ENCODE measurements at regions of chr12 and their contacts with region 1.

Region 1: DNA sequence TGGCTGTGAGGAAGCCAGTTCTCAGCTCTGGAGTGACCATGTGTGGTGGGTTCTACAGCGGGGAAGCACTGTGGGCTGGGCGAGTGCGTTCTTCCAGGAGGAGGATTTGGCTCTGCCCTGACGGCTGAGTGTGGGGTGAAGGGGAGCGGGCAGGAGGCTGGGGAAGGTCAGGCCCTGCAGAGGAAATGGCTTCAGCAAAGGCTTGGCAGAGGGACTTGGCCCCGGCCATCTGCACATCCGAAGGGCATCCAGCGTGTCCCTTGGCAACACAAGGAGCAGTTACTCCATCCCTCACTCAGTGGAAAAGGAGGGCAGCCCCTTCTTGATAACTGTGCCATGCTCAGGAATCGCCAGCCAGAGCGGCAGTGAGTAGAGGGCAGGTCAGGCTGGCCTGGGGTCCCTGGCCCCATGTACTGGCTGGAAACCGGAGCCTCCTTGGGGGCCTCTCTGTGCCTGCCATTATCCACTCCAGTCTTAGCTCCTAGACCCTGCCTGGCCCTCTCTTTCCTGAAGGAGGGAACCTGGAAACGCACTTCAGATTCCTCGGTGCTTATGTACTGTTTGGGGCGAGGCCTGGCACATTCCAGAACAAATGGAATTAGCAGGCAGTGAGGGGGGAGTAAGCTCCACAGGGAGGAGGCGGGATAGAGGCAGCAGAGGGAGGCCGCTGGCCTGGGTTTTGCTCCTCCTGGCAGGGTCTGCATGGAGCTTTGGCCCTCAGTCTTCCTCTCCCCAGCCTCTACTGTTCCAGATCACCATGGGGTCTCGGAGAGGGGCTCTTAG is 133.6 kb upstream of the NCOR2 start:
- DNase-seq: no peak
- ATAC-seq: no peak
- H3K4me3 ChIP-seq: no peak overlapping the region
- H3K27ac ChIP-seq: no peak overlapping the region
- H3K4me1 ChIP-seq: peaks cover 0 to 3% of the 10 kb centered on the region in 2 experiments; a peak in 1 of 5 replicates
- H3K27me3 ChIP-seq: peaks cover 61 to 83% of the 10 kb centered on the region in 2 experiments
- CTCF ChIP-seq: no peak
- EP300 ChIP-seq: no peak
- POLR2A ChIP-seq: no peak
- RAD21 ChIP-seq: no peak

Region 2: DNA sequence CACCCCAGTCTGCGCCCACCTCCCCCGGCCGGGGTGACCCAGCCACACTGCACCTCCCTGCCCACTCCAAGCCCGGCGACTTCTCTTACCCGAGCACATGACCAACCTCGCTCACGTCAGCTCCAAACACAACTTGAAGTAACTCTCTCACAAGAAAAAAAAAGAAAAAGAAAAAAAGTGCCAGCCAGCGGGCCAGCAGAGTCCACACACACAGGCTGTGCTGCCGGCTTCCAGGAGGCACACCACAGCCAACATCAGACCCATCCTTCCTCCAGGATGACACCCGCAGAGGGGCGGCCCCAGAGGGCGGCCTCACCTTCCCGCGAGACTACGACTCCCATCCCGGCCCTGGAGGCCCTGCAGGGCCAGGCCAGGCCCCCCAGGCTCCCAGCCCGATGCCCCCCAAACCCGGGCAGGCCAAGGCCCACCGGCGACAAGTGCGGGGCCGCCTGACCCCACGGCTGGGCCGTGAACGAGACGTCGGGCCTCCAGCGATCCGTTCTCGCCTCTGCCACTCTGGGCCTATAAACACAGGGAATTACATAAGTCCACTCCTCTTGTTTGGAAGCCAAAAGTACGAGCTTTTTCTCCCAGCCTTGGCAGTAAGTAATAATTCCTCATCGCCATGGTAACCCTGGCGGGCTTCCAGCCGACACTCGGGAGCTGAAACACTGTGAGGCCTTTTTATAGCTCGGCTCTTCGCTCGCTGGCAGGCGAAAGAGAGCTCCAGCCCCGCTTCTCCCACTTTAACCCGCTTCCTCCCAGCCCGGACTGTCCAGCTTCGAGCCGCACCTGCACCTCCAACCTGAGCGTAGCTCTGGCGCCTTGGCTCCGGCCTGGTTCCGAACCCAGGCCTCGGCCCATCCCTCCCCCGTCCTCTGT is 182.7 kb before region 1 on chr12:
- CTCF ChIA-PET with region 1: no interaction called
- POLR2A ChIA-PET with region 1: no interaction called
- in situ Hi-C with region 1: no loop called
- intact Hi-C with region 1: no loop called
- DNase-seq: peak in 1 of 4 experiments; percentile 57
- ATAC-seq: peak; percentile 44
- H3K4me3 ChIP-seq: no peak overlapping the region
- H3K27ac ChIP-seq: peak overlapping the region; percentile 59; the same call in 2 of the 3 replicates
- H3K4me1 ChIP-seq: peaks cover 19 to 58% of the 10 kb centered on the region in 2 experiments
- H3K27me3 ChIP-seq: no peaks in the 10 kb centered on the region
- CTCF ChIP-seq: no peak
- EP300 ChIP-seq: no peak
- POLR2A ChIP-seq: no peak
- RAD21 ChIP-seq: no peak

Region 3: DNA sequence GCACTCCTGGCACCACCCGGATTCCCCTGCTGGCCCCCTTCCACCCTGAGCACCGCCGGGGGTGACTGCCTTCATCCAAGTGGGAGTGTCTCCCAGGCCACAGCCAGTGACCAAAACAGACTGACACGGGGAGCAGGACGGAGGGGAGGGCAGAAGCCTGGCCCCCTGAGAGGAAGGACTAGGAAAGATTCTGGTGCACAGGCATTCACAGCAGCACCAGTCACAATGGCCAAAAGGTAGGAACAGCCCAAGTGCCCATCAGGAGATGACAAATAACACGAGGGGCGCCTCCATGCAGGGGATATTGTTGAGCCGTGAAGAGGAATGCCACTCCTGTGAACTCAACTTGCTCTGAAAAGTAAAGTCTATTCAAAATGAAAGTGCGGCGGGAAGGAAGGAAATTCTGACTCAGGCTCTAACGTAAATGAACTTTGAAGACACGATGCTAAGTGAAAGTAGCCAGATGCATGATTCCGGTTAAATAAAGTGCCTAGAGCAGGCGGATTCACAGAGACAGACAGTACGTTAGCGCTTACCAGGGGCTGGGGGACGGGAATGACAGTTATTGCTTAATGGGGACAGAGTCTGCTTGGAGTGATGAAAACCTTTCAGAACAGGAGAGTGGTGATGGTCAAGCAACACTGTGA is 12.6 kb after region 1 on chr12:
- CTCF ChIA-PET with region 1: no interaction called
- POLR2A ChIA-PET with region 1: interaction called, 13 read pairs
- in situ Hi-C with region 1: no loop called
- intact Hi-C with region 1: no loop called
- DNase-seq: no peak
- ATAC-seq: no peak
- H3K4me3 ChIP-seq: no peak overlapping the region
- H3K27ac ChIP-seq: no peak overlapping the region
- H3K4me1 ChIP-seq: peaks cover 15 to 16% of the 10 kb centered on the region in 2 experiments; a peak in 4 of 5 replicates
- H3K27me3 ChIP-seq: peaks cover 14 to 36% of the 10 kb centered on the region in 2 experiments; a peak in 4 of 5 replicates
- CTCF ChIP-seq: no peak
- EP300 ChIP-seq: no peak
- POLR2A ChIP-seq: no peak
- RAD21 ChIP-seq: no peak

Region 4: DNA sequence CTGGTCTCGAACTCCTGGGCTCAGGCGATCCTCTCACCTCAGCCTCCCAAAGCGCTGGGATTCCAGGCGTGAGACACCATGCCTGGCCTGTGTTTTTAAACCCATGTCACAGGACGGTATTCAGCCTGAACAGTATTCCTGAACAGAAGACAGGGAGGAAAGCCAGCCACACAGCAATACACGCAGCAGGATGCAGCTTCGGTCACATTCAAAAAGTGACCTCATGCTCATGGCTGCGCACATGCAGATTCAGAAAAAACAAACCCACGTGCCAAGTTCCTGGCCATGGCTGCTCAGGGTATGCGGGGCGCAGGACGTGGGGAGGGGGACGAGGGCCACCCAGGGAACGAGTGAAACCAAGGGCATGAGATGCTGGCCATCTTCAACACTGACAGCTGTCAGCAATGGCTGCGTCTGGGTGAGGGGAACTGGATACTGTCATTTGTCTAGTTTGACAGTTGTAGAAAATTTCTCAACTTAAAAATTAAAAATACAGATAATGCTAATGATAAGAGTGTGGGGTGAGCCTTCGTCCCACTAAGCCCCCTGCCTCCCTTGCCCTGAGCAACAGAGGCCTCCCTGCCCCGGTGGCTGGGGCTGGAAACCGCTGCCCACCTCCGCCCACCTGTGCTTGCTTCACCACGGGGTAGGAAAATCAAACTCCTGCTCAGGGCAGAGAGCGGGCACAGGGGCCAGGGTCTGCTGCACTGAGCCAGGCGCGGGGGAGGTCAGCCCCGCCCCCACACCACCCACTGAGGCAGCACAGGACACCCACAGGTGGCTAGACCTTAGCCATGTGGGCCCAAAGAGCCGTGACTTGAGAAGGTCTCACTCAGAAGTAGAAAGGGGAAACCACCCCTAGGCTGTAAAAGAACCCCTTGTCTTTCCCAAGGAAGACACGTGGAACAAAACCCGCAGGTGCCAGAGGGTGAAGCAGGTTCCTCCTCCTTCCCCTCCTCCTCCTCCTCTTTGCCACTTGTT is 78.5 kb after region 1 on chr12:
- CTCF ChIA-PET with region 1: no interaction called
- POLR2A ChIA-PET with region 1: no interaction called
- in situ Hi-C with region 1: no loop called
- intact Hi-C with region 1: no loop called
- DNase-seq: no peak
- ATAC-seq: no peak
- H3K4me3 ChIP-seq: no peak overlapping the region
- H3K27ac ChIP-seq: no peak overlapping the region
- H3K4me1 ChIP-seq: peaks cover 14 to 38% of the 10 kb centered on the region in 2 experiments
- H3K27me3 ChIP-seq: no peaks in the 10 kb centered on the region
- CTCF ChIP-seq: no peak
- EP300 ChIP-seq: no peak
- POLR2A ChIP-seq: no peak
- RAD21 ChIP-seq: no peak